PC-3 (cell line): ENCODE measurements at regions of chr7 and their contacts with region 1.

Region 1: DNA sequence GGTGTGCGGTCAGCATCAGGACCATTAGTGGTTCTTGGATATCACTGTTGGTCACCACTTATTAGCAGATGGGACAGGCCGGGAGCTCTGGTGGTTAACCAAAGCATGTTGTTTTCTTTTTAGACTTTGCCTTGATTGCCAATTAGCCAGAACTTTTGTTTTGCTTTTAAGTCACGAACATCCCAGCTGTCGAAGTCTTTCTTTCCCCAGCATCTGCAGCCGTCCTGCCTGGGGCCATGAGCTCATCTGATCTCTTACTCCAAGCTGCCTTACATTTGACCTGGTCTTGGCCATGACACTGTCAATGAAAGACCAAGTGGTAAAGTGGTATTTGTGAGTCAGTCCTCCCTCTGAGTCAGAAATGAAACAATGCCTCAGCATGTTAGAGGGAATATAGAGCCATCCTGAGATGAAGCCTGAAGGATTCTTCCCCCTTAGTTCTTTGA is 53.9 kb upstream of the CREB5 start:
- DNase-seq: peak; percentile 93
- ATAC-seq: peak; percentile 82
- H3K4me3 ChIP-seq: no peak overlapping the region
- H3K27ac ChIP-seq: peak overlapping the region; percentile 87
- H3K4me1 ChIP-seq: peaks cover 48% of the 10 kb centered on the region
- H3K27me3 ChIP-seq: no peaks in the 10 kb centered on the region
- CTCF ChIP-seq: no peak

Region 2: DNA sequence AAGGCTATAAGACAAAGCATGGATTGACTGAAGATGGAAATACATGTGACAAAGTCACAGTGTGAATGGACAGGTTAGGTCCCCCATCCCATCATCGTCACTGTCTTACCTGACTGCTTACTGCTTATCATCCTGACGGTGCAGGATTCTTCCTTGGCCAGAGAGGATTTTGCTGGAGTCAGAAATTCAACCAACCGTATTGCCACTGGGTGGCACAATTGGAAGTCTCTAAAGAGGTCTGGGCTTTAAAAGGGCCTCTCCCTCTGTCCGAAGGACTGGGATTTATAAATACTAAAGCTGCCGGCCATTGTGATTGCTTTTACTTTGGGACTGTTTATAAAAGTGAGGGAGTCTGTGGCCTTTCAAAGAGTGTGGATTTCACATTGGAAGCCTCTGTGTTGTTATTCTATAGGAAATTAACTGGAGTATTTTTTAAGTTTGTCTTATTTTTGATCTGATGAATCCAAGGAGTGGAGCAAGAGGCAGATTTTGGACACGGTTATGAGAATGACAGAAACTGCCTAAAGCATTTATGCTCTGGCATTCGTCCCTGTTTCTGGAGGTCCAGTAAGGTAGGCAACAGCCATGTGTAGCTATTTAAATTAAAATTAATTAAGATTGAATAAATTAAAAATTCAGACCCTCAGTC is 59.5 kb before region 1 on chr7:
- CTCF ChIA-PET with region 1: interaction called, 4 read pairs
- POLR2A ChIA-PET with region 1: no interaction called
- intact Hi-C with region 1: loop called (anchors 1 kb)
- DNase-seq: peak; percentile 85
- ATAC-seq: peak; percentile 94
- H3K4me3 ChIP-seq: no peak overlapping the region
- H3K27ac ChIP-seq: 0 out of 2 replicates have a peak overlapping the region, but pooled peaks have one; percentile 13
- H3K4me1 ChIP-seq: peaks cover 13% of the 10 kb centered on the region
- H3K27me3 ChIP-seq: no peaks in the 10 kb centered on the region
- CTCF ChIP-seq: peak; percentile 82

Region 3: GRCh38 chr7:28315565-28316420 is 42.7 kb before region 1 on chr7:
- CTCF ChIA-PET with region 1: no interaction called
- POLR2A ChIA-PET with region 1: no interaction called
- intact Hi-C with region 1: loop called (anchors 1 kb)
- DNase-seq: no peak
- ATAC-seq: no peak
- H3K4me3 ChIP-seq: no peak overlapping the region
- H3K27ac ChIP-seq: no peak overlapping the region
- H3K4me1 ChIP-seq: peaks cover 21% of the 10 kb centered on the region
- H3K27me3 ChIP-seq: no peaks in the 10 kb centered on the region
- CTCF ChIP-seq: no peak

Region 4: DNA sequence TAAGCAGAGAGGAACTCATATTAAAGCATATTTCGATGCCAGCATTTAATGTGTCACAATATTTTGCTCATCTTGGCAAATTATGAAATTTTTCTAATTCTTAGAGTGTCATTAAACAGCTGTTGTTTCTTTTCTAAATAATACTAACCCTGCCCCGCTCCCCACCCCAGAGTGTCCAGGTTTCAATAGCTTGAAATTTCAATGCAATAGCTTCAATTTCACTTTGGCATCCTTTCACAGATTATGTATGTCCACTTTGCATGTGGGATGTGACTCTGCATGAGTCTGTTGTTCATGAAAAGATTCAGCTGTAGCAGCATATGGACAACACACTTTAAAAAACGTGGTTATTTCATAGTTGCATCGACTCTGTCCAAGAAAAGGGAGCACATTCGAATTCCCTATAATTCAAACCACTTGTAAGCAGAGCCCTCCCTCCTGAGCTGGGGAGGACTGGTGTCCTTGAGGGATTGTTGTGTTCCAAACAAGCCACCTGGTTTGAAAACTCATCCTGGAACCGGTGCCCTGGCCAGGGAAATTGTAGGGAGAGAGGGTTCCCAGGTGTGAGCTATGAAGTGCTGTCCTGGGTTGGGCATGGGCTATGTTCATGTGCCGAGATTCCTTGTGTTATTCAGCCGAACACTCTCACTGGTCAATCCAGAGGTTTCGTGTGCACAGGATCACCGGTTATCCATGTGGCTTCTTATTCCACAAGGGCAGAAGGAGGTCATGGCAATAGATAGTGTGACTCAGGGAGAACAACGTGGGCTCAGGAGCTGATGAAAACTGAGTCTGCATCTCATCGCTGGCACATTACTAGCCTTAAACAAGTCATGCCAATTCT is 10.7 kb before region 1 on chr7:
- CTCF ChIA-PET with region 1: interaction called, 3 read pairs
- POLR2A ChIA-PET with region 1: no interaction called
- intact Hi-C with region 1: loop called (anchors 1 kb)
- DNase-seq: peak; percentile 76
- ATAC-seq: peak; percentile 55
- H3K4me3 ChIP-seq: no peak overlapping the region
- H3K27ac ChIP-seq: peak overlapping the region; percentile 80
- H3K4me1 ChIP-seq: peaks cover 45% of the 10 kb centered on the region
- H3K27me3 ChIP-seq: no peaks in the 10 kb centered on the region
- CTCF ChIP-seq: no peak

Region 5: GRCh38 chr7:28419717-28420116 is 61.3 kb after region 1 on chr7:
- CTCF ChIA-PET with region 1: no interaction called
- POLR2A ChIA-PET with region 1: no interaction called
- intact Hi-C with region 1: no loop called
- DNase-seq: peak; percentile 30
- ATAC-seq: no peak
- H3K4me3 ChIP-seq: no peak overlapping the region
- H3K27ac ChIP-seq: no peak overlapping the region
- H3K4me1 ChIP-seq: no peaks in the 10 kb centered on the region
- H3K27me3 ChIP-seq: no peaks in the 10 kb centered on the region
- CTCF ChIP-seq: no peak

Region 6: DNA sequence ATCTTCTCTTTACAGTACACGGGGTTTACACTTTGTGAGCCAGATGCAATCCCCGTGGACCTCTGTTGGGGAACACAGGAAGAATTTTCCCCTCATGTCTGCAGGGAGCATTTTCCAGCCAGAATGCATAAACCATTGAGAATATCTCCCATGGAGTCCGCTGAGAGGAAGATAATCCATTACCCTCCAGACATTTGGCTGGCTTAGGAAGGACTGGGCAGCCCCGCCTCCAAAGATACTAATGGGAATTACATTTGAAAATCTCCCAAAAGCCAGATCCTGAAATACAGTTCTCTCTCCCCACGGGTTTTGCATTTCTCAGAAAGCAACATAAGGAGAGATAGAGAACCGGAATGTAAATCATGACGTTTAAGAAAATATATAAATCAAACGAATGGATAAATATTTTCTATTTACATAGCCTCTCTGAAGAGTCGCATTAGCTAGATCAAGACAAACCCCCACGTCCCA is 546.2 kb after region 1 on chr7:
- CTCF ChIA-PET with region 1: no interaction called
- POLR2A ChIA-PET with region 1: no interaction called
- intact Hi-C with region 1: no loop called
- DNase-seq: no peak
- ATAC-seq: no peak
- H3K4me3 ChIP-seq: no peak overlapping the region
- H3K27ac ChIP-seq: no peak overlapping the region
- H3K4me1 ChIP-seq: no peaks in the 10 kb centered on the region
- H3K27me3 ChIP-seq: no peaks in the 10 kb centered on the region
- CTCF ChIP-seq: no peak